ENCODE measurements at regions of chr19 and their contacts with region 1.

Region 1: GRCh38 chr19:16197622-16198369 is at the start of gene AP1M1:
- DNase-seq: peak; percentile 99
- H3K4me3 Mint-ChIP-seq: peak within 1 kb of the TSS; percentile 95
- H3K27ac Mint-ChIP-seq: peak within 1 kb of the TSS; percentile 95
- H3K4me1 Mint-ChIP-seq: peaks cover 51% of the 10 kb centered on the region
- H3K27me3 Mint-ChIP-seq: no peaks in the 10 kb centered on the region
- total RNA-seq, gene AP1M1: 116 and 117 TPM in 2 replicates

Region 2: DNA sequence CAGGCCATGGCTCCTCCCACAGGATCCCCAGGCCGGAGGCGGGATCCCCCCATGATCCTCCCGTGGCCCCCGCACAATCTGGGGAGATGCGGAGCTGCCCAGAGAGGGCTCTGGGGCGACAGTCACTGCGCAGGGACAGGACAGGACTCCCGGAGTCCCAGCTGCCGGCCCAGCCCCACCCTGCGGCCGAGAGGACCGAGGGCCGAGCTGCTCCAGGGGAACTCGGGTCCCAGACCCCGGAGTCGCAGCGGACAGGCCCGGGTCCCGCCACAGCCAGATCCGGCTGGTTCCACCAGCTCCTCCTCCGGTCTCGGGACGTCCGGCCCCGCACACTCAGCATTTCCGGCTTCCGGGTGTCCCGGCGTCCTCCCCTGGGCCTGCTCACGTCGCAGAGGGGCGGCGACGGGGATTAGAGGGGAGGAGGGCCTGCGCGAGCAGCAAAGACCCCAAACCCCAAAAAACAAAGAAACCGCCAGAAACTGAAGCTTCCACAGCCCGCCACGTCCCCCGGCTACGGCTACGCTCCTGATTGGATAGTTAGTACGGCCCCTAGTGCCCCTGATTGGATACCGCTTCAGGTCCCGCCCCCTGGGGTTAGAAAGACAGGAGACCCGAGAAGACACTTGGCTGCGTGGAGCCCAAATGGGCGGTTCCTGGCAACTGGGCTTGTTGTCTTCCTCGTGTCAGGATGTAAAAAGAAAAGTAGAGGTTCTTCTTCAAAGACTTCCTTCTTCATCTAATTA is 361.0 kb before region 1 on chr19:
- intact Hi-C with region 1: loop called (anchors 2 kb)
- DNase-seq: peak; percentile 94
- H3K4me3 Mint-ChIP-seq: peak overlapping the region; percentile 92
- H3K27ac Mint-ChIP-seq: peak overlapping the region; percentile 99
- H3K4me1 Mint-ChIP-seq: peaks cover 16% of the 10 kb centered on the region
- H3K27me3 Mint-ChIP-seq: no peaks in the 10 kb centered on the region

Region 3: GRCh38 chr19:16118489-16119033 is 79.2 kb before region 1 on chr19:
- intact Hi-C with region 1: loop called (anchors 1 kb)
- DNase-seq: peak; percentile 41
- H3K4me3 Mint-ChIP-seq: peak overlapping the region; percentile 70
- H3K27ac Mint-ChIP-seq: peak overlapping the region; percentile 95
- H3K4me1 Mint-ChIP-seq: peaks cover 51% of the 10 kb centered on the region
- H3K27me3 Mint-ChIP-seq: peaks cover 1% of the 10 kb centered on the region

Region 4: DNA sequence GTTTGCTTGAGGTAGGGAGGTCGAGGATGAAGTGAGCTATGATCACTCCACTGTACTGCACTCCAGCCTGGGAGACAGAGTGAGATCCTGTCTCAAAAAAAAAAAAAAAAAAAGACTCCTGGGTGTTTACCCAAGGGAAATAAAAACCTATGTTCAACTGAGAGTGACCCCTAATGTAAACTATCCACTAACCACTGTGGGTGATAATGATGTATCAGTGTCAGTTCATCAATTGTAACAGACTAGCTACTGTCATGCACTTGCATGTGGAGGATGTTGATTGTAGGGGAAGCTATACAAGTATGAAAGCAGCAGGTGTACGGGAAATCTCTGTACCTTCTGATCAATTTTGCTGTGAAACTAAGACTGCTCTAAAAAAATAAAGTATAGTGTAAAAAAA is 21.8 kb before region 1 on chr19:
- intact Hi-C with region 1: no loop called
- DNase-seq: no peak
- H3K4me3 Mint-ChIP-seq: no peak overlapping the region
- H3K27ac Mint-ChIP-seq: no peak overlapping the region
- H3K4me1 Mint-ChIP-seq: peaks cover 8% of the 10 kb centered on the region
- H3K27me3 Mint-ChIP-seq: peaks cover 1% of the 10 kb centered on the region

Region 5: DNA sequence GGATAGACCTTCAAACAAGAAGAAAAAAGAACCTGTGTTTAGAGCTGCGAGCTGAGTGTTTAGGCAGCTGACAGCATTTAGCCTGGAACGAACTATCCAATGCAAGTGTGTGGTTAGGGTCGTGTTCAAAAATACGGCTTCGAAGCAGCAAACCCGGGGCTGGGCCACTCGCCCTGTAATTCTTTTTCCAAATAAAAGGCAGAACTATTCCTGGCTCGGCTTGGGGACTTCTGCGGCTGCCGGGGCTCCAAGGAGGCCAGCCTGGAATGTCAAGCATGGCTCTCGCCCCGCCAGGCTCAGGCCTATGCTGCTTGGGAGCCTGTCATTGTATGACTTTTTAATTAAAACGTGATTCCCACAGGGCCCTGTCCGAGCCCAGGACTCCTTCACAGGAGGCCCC is 75.1 kb after region 1 on chr19:
- intact Hi-C with region 1: no loop called
- DNase-seq: no peak
- H3K4me3 Mint-ChIP-seq: no peak overlapping the region
- H3K27ac Mint-ChIP-seq: no peak overlapping the region
- H3K4me1 Mint-ChIP-seq: peaks cover 12% of the 10 kb centered on the region
- H3K27me3 Mint-ChIP-seq: peaks cover 31% of the 10 kb centered on the region

Region 6: DNA sequence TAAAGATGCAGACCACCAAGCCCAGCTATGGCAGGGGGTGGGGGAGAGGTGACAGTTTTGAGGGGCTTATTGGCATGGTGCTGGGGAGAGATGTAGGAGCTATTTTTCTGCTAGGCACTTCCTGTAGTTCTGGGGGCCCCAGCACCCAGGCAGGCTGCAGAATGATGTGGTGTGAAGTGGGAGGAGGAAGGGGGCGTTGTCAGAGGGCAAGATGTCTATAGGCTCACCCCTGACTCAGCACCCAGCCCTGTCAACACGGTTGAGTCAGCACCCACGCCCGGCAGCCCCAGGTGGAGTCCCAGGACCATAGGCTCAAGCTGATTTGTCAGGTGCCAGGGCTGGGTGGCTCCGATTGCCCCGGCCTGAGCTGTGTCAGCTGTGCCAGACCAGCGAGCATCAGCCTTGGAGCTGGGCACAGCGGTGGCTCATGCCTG is 132.6 kb after region 1 on chr19:
- intact Hi-C with region 1: loop called (anchors 2 kb)
- DNase-seq: peak; percentile 89
- H3K4me3 Mint-ChIP-seq: peak overlapping the region; percentile 93
- H3K27ac Mint-ChIP-seq: peak overlapping the region; percentile 79
- H3K4me1 Mint-ChIP-seq: peaks cover 67% of the 10 kb centered on the region
- H3K27me3 Mint-ChIP-seq: peaks cover 9% of the 10 kb centered on the region

Region 7: DNA sequence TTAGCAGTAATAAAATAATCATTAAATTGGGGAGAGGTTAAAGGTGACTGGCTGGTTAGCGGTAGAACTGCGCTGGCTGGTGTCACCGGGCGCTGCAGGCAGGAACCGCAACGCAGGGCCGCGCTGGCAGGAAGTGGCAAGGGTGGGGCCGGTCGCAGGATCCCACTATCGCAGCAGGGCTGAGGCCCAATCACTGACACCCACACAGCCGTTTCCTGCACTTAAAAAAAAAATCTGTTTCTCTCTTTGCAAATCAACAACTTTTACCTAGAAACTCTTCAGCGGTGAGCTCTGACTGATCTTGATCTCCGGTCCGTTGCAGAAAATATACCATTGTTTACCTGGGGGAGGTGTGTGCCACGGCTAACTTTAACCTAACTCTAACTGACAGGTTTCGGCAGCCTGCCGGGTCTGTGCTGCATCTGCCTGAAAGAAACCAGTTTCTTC is 173.8 kb after region 1 on chr19:
- intact Hi-C with region 1: loop called (anchors 1 kb)
- DNase-seq: peak; percentile 89
- H3K4me3 Mint-ChIP-seq: peak overlapping the region; percentile 64
- H3K27ac Mint-ChIP-seq: peak overlapping the region; percentile 83
- H3K4me1 Mint-ChIP-seq: peaks cover 33% of the 10 kb centered on the region
- H3K27me3 Mint-ChIP-seq: peaks cover 7% of the 10 kb centered on the region

Region 8: DNA sequence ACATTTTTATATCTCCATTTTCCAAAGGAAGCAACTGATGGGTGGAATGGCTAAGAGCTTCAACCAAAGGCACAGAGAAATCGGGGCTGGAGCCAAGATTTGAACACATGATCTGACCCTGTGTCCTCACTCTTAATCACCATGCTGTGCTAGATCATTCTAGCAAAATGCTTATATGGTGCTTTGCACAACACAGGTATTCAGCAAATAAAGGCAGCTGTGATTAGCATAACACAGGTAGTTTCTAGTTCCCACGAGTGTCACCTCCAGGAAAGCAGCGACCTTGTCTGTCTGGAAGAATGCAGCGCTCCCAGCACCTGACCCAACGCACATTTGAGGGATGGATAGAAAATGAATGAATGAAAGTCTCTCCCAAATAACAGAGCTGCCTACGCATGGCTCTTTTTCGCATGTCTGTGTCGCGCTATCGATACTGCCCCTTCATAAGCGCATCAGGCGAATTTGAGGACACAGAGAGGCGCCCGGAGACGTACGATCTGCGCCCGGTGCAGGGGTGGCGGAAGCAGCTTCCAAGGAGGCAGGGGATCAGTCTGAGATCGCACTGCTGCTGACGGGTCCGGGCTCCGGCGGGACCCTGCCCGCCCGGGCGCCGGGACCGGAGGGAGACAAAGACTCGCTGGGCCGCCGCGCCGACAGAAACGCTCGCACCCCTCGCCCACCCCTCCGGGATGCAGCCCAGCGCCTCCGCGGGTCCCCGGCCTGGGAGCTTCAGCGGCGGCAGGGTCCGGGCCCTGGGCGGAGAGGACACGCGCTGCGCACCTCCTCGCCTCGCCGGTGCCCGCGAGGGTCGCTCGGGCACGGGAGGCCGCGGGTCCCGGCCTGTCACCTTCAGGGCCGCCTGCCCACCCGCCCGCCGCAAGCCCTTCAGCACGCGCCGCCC is 273.4 kb after region 1 on chr19:
- intact Hi-C with region 1: loop called (anchors 1 kb)
- DNase-seq: peak; percentile 22
- H3K4me3 Mint-ChIP-seq: peak overlapping the region; percentile 90
- H3K27ac Mint-ChIP-seq: peak overlapping the region; percentile 72
- H3K4me1 Mint-ChIP-seq: peaks cover 28% of the 10 kb centered on the region
- H3K27me3 Mint-ChIP-seq: no peaks in the 10 kb centered on the region